ENCODE measurements at regions of chr12 and their contacts with region 1.

Region 1: DNA sequence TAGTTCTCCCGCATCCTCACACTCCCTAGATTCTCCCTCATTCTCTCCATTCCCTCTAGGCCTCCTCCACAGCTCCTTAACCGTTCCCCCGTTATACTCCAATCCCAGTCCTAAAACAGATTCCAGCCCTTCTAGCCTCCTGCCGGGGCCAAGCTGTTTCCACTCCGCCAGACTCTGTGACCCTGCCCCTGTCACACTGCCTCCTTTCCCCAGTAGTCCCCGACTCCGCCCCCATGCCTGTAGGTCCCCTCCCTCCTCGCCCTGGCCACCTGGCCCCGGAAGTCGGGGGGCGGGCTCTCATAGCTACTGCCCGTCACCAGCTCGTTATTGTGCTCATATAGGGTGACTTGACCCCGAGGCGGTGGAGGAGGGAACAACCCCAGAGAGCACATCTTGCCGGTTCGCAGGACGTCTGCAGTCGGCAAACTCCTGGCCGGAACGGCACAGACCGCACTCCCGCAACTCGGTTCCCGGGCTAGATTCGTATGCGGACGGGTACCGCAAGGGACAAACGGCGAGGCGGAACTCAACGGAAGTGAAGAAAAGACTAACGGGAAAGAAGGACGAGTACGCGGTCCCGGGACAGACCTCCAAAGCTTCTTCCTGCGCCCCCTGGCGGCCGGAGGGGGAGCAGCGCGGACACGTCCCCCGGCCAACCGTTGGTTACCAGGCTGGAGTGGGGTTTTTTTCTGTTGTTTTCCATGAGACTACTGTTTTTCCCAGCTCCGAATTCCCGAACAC is at the start of gene AAAS:
- DNase-seq: peak; percentile 93
- ATAC-seq: peak; percentile 84
- H3K4me3 Mint-ChIP-seq: peak within 1 kb of the TSS; percentile 95
- H3K27ac Mint-ChIP-seq: peak within 1 kb of the TSS; percentile 95
- H3K4me1 Mint-ChIP-seq: peaks cover 36% of the 10 kb centered on the region
- H3K27me3 Mint-ChIP-seq: no peaks in the 10 kb centered on the region
- CTCF ChIP-seq: peak; percentile 57
- total RNA-seq, gene AAAS: 57.3 and 72.1 TPM in 2 replicates

Region 2: GRCh38 chr12:53079226-53080117 is 241.8 kb before region 1 on chr12 and contains the start of gene SPRYD3:
- CTCF ChIA-PET with region 1: no interaction called
- POLR2A ChIA-PET with region 1: interaction called, 9 read pairs
- intact Hi-C with region 1: loop called (anchors 10 kb)
- DNase-seq: peak; percentile 98
- ATAC-seq: peak; percentile 98
- H3K4me3 Mint-ChIP-seq: peak within 1 kb of the TSS; percentile 92
- H3K27ac Mint-ChIP-seq: peak within 1 kb of the TSS; percentile 87
- H3K4me1 Mint-ChIP-seq: peaks cover 31% of the 10 kb centered on the region
- H3K27me3 Mint-ChIP-seq: no peaks in the 10 kb centered on the region
- CTCF ChIP-seq: no peak
- total RNA-seq, gene SPRYD3: 32.5 and 33.9 TPM in 2 replicates

Region 3: GRCh38 chr12:53145383-53146260 is 175.6 kb before region 1 on chr12:
- CTCF ChIA-PET with region 1: no interaction called
- POLR2A ChIA-PET with region 1: no interaction called
- intact Hi-C with region 1: no loop called
- DNase-seq: no peak
- ATAC-seq: no peak
- H3K4me3 Mint-ChIP-seq: no peak overlapping the region
- H3K27ac Mint-ChIP-seq: no peak overlapping the region
- H3K4me1 Mint-ChIP-seq: no peaks in the 10 kb centered on the region
- H3K27me3 Mint-ChIP-seq: peaks cover 7% of the 10 kb centered on the region
- CTCF ChIP-seq: no peak

Region 4: DNA sequence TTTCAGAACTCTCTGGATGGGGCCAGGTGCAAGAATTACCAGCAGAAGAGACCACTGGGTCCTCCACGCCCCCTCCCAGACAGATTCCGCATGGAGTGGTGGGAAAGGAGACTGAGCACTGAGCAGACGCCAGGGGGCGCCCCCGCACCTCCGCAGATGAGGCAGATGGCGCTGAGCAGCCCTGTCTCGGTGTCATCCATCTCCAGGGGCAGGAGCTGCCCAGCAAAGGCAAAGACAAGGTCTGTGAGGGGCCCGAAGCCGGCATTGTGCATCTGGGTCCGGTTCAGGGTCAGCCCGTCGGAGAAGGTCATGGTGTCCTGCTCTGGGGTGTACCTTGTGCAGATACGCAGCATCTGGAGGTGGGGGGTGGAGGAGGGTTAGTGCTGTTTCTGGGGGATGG is 107.9 kb before region 1 on chr12:
- CTCF ChIA-PET with region 1: interaction called, 61 read pairs
- POLR2A ChIA-PET with region 1: interaction called, 5 read pairs
- intact Hi-C with region 1: loop called (anchors 1 kb)
- DNase-seq: peak; percentile 82
- ATAC-seq: peak; percentile 75
- H3K4me3 Mint-ChIP-seq: no peak overlapping the region
- H3K27ac Mint-ChIP-seq: peak overlapping the region; percentile 6
- H3K4me1 Mint-ChIP-seq: peaks cover 76% of the 10 kb centered on the region
- H3K27me3 Mint-ChIP-seq: no peaks in the 10 kb centered on the region
- CTCF ChIP-seq: peak; percentile 49

Region 5: GRCh38 chr12:53287741-53288216 is 33.5 kb before region 1 on chr12:
- CTCF ChIA-PET with region 1: interaction called, 4 read pairs
- POLR2A ChIA-PET with region 1: no interaction called
- intact Hi-C with region 1: loop called (anchors 1 kb)
- DNase-seq: peak; percentile 53
- ATAC-seq: peak; percentile 100
- H3K4me3 Mint-ChIP-seq: no peak overlapping the region
- H3K27ac Mint-ChIP-seq: no peak overlapping the region
- H3K4me1 Mint-ChIP-seq: peaks cover 4% of the 10 kb centered on the region
- H3K27me3 Mint-ChIP-seq: no peaks in the 10 kb centered on the region
- CTCF ChIP-seq: no peak

Region 6: GRCh38 chr12:53352331-53353256 is 31.4 kb after region 1 on chr12:
- CTCF ChIA-PET with region 1: interaction called, 23 read pairs
- POLR2A ChIA-PET with region 1: interaction called, 6 read pairs
- intact Hi-C with region 1: no loop called
- DNase-seq: peak; percentile 56
- ATAC-seq: peak; percentile 100
- H3K4me3 Mint-ChIP-seq: no peak overlapping the region
- H3K27ac Mint-ChIP-seq: peak overlapping the region; percentile 37
- H3K4me1 Mint-ChIP-seq: peaks cover 4% of the 10 kb centered on the region
- H3K27me3 Mint-ChIP-seq: no peaks in the 10 kb centered on the region
- CTCF ChIP-seq: no peak

Region 7: GRCh38 chr12:53492830-53493611 is 171.8 kb after region 1 on chr12:
- CTCF ChIA-PET with region 1: interaction called, 3 read pairs
- POLR2A ChIA-PET with region 1: interaction called, 3 read pairs
- intact Hi-C with region 1: loop called (anchors 2 kb)
- DNase-seq: peak; percentile 95
- ATAC-seq: peak; percentile 92
- H3K4me3 Mint-ChIP-seq: peak overlapping the region; percentile 87
- H3K27ac Mint-ChIP-seq: peak overlapping the region; percentile 84
- H3K4me1 Mint-ChIP-seq: peaks cover 21% of the 10 kb centered on the region
- H3K27me3 Mint-ChIP-seq: no peaks in the 10 kb centered on the region
- CTCF ChIP-seq: no peak

Region 8: DNA sequence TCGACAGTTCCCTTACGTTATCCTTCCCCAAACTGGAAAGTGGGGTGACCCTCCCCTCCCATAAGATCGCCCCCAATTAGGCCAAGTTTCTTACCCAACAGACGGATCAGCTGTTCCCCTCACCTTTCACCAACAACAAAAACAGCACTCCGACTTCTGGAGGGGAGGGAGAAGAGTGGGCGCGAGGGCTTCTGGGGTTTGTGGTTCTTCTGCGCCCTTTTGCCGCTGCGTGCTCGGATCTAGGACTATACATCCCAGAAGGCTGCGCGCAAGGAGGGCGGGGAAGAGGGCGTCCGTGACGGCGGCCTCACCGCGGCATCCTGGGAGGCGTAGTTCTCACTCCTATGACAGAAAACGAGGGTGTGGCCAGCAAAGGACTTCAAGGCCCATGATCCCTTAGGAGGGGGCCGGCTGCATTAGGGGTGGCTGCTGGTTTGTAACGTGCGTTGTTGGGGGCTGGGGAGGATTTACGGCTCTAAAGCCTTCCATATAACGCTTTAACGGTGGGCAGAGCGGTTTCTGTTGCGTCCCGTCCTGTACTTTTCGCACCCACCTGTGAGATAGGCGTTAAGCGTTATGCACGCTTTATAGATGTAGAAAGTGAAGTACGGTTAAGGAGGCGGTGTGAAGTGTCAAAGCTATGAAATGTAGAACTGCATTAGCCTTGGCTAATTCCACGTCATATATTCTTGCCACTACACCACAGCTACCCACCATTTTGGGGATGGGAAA is 406.2 kb after region 1 on chr12 and contains the start of gene CALCOCO1:
- CTCF ChIA-PET with region 1: no interaction called
- POLR2A ChIA-PET with region 1: no interaction called
- intact Hi-C with region 1: loop called (anchors 10 kb)
- DNase-seq: peak; percentile 90
- ATAC-seq: peak; percentile 97
- H3K4me3 Mint-ChIP-seq: peak within 1 kb of the TSS; percentile 97
- H3K27ac Mint-ChIP-seq: peak within 1 kb of the TSS; percentile 88
- H3K4me1 Mint-ChIP-seq: peaks cover 24% of the 10 kb centered on the region
- H3K27me3 Mint-ChIP-seq: no peaks in the 10 kb centered on the region
- CTCF ChIP-seq: no peak
- total RNA-seq, gene CALCOCO1: 44.2 and 59.5 TPM in 2 replicates